PC-3 (cell line): ENCODE measurements at regions of chr12 and their contacts with region 1.

Region 1: GRCh38 chr12:10364815-10365622 is 24.8 kb downstream of the KLRK1 start:
- DNase-seq: peak; percentile 79
- ATAC-seq: peak; percentile 32
- H3K4me3 ChIP-seq: peak overlapping the region; percentile 74
- H3K27ac ChIP-seq: peak overlapping the region; percentile 65
- H3K4me1 ChIP-seq: peaks cover 49% of the 10 kb centered on the region
- H3K27me3 ChIP-seq: no peaks in the 10 kb centered on the region
- CTCF ChIP-seq: no peak

Region 2: DNA sequence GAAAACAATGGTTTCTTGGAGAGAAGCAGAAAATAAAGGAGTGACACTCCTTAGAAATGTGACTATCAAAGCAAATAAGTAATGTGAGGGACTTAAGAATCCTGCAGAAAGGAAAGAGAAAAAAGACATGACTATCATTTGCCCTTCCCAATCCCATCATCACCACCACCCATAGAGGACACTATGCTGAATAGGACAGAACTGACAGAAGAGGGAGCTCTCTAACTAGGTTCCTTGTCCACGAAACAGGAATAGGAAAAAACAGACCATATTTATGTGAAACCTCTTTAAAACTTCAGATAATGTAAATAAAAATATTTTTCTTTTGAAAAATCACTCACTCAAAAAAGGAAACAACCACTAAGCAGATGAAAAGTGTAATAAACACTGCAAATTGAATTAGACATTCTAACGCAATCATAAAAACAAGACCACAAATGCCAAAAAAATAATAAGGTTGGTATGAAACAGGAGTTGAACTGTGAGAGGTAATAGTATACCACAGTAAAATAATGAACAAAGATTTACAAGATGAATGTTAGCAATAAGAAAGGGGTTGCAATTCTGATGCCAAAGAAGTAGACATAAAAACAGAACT is 33.3 kb before region 1 on chr12:
- CTCF ChIA-PET with region 1: interaction called, 3 read pairs
- POLR2A ChIA-PET with region 1: no interaction called
- intact Hi-C with region 1: loop called (anchors 1 kb)
- DNase-seq: peak; percentile 67
- ATAC-seq: peak; percentile 81
- H3K4me3 ChIP-seq: no peak overlapping the region
- H3K27ac ChIP-seq: no peak overlapping the region
- H3K4me1 ChIP-seq: 0 out of 2 replicates have a peak, but pooled peaks cover 2% of the 10 kb centered on the region
- H3K27me3 ChIP-seq: no peaks in the 10 kb centered on the region
- CTCF ChIP-seq: peak; percentile 83

Region 3: DNA sequence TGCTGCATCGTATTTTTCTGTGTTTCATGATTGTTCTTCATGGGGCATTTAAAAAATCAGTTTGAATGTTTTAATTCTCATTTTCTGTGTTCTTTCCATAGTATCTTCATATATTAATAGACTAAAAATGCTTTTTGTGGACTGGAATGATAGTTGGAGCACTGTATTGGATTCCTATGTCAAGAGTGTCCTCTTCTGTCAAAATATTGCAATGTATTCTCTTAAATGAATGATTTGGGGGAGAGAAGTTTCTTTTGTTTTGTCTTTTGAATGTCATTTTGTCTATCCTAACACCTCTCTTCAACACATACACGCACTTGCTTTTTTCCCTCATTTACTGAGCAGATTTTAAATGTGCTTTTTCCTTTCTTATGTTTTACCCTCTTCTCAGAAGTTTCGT is 136.0 kb after region 1 on chr12:
- CTCF ChIA-PET with region 1: interaction called, 3 read pairs
- POLR2A ChIA-PET with region 1: no interaction called
- intact Hi-C with region 1: loop called (anchors 10 kb)
- DNase-seq: peak; percentile 25
- ATAC-seq: no peak
- H3K4me3 ChIP-seq: no peak overlapping the region
- H3K27ac ChIP-seq: no peak overlapping the region
- H3K4me1 ChIP-seq: no peaks in the 10 kb centered on the region
- H3K27me3 ChIP-seq: no peaks in the 10 kb centered on the region
- CTCF ChIP-seq: peak; percentile 47

Region 4: GRCh38 chr12:10673660-10674384 is 308.8 kb after region 1 on chr12 and contains the start of gene STYK1:
- CTCF ChIA-PET with region 1: no interaction called
- POLR2A ChIA-PET with region 1: no interaction called
- intact Hi-C with region 1: loop called (anchors 1 kb)
- DNase-seq: peak; percentile 89
- ATAC-seq: peak; percentile 86
- H3K4me3 ChIP-seq: peak within 1 kb of the TSS; percentile 80
- H3K27ac ChIP-seq: peak within 1 kb of the TSS; percentile 86
- H3K4me1 ChIP-seq: peaks cover 15% of the 10 kb centered on the region; the same call in 1 of the 2 replicates
- H3K27me3 ChIP-seq: no peaks in the 10 kb centered on the region
- CTCF ChIP-seq: peak; percentile 90
- total RNA-seq, gene STYK1: 4.3 and 8.6 TPM in 2 replicates